PC-9 (cell line): ENCODE measurements at regions of chr4 and their contacts with region 1.

Region 1: GRCh38 chr4:158302076-158302866 is 92.0 kb downstream of the TMEM144 start:
- DNase-seq: peak; percentile 46 to 61
- H3K4me3 ChIP-seq: no peak overlapping the region
- H3K27ac ChIP-seq: peak overlapping the region; percentile 57
- H3K4me1 ChIP-seq: peaks cover 12% of the 10 kb centered on the region
- H3K27me3 ChIP-seq: no peaks in the 10 kb centered on the region
- CTCF ChIP-seq: no peak

Region 2: DNA sequence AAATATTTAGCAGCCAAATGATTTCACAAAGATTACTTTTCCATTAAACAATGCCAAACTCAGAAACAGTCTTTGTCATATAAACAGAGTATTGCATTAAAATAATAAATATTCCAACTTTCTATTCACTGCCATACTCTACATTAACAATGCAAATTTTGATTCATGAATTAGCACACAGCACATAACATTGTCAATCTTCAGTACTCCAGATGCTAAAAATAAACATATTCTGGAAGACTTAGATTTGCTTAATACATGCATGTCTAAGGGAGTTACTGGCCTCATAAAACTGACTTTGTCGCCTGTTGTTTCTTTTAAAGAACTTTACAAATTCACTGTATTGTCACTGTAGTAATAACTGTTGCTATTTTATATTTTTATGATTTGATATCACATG is 39.6 kb after region 1 on chr4:
- CTCF ChIA-PET with region 1: no interaction called
- POLR2A ChIA-PET with region 1: no interaction called
- intact Hi-C with region 1: loop called (anchors 1 kb)
- DNase-seq: no peak
- H3K4me3 ChIP-seq: no peak overlapping the region
- H3K27ac ChIP-seq: no peak overlapping the region
- H3K4me1 ChIP-seq: no peaks in the 10 kb centered on the region
- H3K27me3 ChIP-seq: no peaks in the 10 kb centered on the region
- CTCF ChIP-seq: no peak

Region 3: DNA sequence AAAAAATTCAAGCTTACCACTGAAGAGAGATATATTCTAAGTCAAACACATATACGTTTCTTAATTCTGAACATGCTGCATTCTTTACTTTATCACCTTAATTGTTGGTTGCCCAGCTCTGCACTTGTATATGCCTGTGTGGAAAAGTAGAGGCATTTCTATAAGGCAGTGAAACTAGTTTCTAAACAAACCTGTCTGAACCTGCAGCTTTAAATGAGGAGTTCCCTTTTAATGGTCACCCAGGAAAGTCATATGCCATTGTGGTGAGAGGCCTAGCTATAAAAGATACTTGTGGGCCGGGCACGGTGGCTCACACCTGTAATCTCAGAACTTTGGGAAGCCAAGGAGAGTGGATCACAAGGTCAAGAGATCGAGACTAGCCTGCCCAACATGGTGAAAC is 72.0 kb after region 1 on chr4:
- CTCF ChIA-PET with region 1: no interaction called
- POLR2A ChIA-PET with region 1: no interaction called
- intact Hi-C with region 1: loop called (anchors 2 kb)
- DNase-seq: no peak
- H3K4me3 ChIP-seq: no peak overlapping the region
- H3K27ac ChIP-seq: no peak overlapping the region
- H3K4me1 ChIP-seq: peaks cover 12% of the 10 kb centered on the region
- H3K27me3 ChIP-seq: no peaks in the 10 kb centered on the region
- CTCF ChIP-seq: no peak